A673 (cell line): ENCODE measurements at regions of chr1 and their contacts with region 1.

Region 1: GRCh38 chr1:204382714-204383083 is 23.0 kb upstream of the PLEKHA6 start:
- DNase-seq: no peak
- H3K4me3 ChIP-seq: no peak overlapping the region
- H3K27ac ChIP-seq: no peak overlapping the region
- H3K4me1 ChIP-seq: no peaks in the 10 kb centered on the region
- H3K27me3 ChIP-seq: peaks cover 32% of the 10 kb centered on the region
- CTCF ChIP-seq: no peak

Region 2: DNA sequence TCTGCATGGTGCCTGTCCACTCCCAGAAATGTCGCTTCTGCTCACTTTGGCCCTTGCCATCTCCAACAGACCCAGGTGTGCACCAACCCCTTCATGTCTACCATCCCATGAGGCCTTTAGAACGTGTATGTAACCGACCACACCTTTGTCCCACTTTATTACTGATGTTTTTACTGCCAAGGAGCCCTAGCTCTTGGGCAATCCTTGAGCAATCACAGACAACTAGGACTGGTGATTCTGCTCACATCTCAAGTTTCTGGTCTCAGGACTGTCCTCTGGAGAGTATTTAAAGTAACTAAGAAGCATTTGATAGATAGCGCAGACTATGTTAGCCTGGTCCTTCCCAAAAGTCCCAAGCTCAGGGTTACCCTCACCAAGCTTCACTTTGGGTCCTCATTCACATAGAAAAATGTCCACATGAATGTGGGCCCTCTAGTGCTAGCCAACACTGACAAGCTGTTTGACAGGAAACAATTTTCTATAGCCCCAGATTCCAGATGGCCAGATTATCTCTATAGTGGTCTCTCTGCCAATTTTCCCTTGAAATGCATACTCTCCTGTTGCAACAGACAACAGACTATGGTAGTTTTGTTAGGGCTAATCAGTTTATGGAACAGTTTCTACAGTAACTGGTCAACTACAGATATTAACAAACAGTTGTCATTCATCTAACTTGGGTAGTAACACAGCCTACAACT is 708.5 kb after region 1 on chr1:
- CTCF ChIA-PET with region 1: no interaction called
- POLR2A ChIA-PET with region 1: interaction called, 10 read pairs
- intact Hi-C with region 1: no loop called
- DNase-seq: no peak
- H3K4me3 ChIP-seq: no peak overlapping the region
- H3K27ac ChIP-seq: no peak overlapping the region
- H3K4me1 ChIP-seq: no peaks in the 10 kb centered on the region
- H3K27me3 ChIP-seq: no peaks in the 10 kb centered on the region
- CTCF ChIP-seq: no peak